Left colon (tissue), 2 donors: ENCODE measurements at regions of chr1 and their contacts with region 1.

Region 1: DNA sequence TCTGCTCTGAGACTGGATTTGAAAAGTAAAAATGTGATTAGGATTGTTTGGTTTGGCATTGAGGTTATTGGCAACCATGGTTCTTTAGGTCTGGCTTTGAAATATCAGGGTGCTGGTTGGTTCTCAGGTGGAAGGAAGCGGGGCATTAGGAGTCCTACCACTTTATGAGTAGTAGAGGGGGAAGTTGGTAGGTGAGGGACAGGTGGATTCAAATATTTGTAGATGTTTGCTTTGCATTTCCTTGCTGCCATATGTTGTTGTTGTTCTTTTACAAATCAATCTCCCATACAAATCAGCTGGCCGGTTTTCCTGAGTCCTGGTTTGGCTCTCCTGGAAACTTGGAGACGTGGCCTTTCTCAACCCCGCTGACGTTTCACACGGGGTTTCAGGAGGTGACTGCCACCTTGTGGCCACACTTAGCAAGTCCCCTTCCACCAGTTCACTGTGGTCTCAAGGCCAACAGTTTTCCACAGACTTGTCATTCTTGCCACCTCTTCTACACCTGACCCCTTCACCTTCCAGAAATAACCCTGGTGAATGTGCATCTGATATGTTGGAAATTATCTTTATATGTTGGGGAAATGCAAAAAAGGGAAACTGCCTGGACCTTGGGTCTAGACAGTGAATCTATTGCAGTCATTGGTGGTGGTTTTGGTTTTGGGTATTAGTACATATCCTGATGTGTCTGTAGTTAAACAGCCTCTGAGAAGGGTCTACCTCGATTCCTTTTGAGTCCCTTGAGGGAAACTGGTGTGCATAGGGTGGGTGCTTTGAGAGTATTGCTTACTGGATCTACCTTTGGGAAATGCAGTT is 127.0 kb upstream of the KIAA0040 start:
- DNase-seq: peak; percentile 48 to 77
- ATAC-seq: peak; percentile 91

Region 2: GRCh38 chr1:175035865-175036264 is 283.8 kb before region 1 on chr1:
- intact Hi-C with region 1: loop called in 1 of 2 experiments (anchors 10 kb)
- DNase-seq: no peak
- ATAC-seq: no peak

Region 3: GRCh38 chr1:175154629-175155472 is 164.8 kb before region 1 on chr1:
- intact Hi-C with region 1: loop called (anchors 2 to 5 kb)
- DNase-seq: peak; percentile 51 to 83
- ATAC-seq: peak; percentile 75

Region 4: DNA sequence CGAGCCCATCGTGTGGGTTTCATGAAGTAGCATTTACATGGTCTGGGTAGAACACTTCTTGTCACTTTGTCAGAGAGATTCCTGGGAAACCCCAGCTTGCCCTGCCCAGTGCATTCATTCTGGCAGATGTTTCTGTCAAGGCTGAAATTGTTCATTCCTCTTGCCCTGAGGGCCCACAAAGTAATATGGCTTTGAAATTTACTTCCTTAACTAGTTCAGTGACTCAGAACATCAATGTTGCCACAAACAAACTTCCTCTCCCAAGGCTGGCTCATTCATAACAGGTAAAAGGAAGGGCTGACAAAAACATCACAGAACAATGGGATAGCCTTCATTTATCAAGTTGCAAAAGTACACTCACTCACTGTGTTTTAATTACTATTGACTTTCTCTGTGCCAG is 122.1 kb before region 1 on chr1:
- intact Hi-C with region 1: no loop called
- DNase-seq: no peak
- ATAC-seq: peak; percentile 46

Region 5: GRCh38 chr1:175673371-175674150 is 353.9 kb after region 1 on chr1:
- intact Hi-C with region 1: no loop called
- DNase-seq: no peak
- ATAC-seq: no peak